ENCODE measurements at regions of chr11 and their contacts with region 1.

Region 1: DNA sequence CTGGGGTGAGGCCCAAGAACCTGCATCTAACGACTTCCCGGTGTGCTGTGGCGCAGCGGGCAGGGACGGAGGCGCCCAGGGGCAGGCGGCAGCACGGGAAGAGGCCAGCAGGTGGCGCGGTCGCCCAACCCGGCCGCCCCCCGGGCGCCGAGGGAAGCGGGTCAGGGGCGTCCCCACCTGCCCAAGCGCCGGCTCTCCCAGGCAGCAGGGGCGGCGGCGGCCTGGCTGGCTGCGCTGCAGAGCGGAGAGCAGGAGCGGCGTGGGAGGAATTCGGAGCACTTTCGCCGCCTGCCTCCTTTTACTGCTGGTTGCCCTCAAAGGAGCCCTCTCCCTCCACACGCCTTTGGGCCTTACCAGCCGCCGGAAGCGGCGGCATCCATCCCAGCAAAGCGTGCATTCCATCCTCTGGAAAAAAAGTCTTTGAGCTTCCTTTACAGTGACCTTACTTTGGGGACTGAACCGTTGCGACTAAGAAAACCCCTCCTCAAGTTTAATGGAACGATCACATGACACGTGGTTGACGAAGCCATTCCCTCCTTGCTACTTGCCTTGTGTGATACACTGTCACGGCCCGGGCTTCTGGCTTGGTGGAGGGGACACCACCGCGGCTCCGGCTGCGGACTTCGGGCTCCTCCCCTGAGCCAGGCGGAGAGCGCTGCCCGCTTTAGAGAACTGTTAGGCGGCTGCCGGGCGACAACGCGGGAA is 106.8 kb upstream of the CLMP start:
- DNase-seq: peak; percentile 87

Region 2: DNA sequence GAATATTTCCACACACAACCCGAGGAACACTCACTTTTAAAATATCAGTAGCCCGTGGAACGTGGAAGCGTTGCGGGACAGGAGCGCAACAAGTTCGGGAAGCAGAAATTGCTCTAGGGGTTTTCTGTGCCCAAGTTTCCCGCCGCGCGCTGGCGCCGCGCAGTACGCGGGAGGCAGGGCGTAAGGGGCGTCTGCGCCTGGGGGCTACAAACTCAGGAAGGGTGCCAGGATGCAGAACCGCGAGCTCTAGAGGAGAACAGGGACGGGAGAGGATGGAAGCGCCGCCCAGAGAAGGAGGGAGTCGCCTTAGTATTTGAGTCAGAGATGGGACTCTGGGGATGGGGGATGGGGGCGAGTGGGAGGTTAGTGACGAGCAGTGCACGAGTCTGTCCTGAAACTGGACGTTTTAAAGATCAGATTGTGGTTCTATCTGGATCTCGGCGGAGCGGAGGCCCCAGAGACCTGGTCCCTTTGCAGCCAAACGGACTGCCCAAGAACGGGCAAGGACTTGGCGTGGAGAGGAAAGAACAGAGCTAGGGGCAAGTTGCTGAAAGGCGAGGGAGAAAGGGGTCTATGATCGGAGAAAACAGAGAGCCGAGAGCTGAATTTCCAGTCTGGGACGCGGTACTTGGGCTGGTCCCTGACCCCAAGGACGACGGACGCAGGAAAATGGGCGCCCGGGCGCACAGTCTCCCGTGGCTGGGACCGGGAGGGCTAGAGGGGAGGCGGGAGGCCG is 324.9 kb before region 1 on chr11:
- intact Hi-C with region 1: no loop called
- DNase-seq: no peak

Region 3: GRCh38 chr11:123174196-123175183 is 127.4 kb before region 1 on chr11:
- intact Hi-C with region 1: no loop called
- DNase-seq: no peak

Region 4: DNA sequence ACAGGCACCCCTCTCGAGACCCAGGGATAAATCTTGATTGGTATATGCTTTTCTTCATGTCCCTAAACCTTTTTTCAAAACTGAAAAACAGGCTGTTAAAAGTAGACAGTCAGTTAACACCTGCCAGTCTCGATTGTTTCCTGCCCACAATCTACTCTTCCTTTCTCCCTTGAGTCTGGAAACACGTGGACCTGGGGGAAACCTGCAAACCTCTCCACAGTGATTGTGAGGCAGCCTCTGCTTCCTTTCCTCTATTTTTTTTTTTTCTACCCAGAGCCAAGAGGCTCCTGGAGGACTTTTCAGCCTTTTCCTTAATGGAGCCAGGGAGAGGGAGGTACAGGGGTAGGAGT is 37.4 kb before region 1 on chr11:
- intact Hi-C with region 1: no loop called
- DNase-seq: no peak

Region 5: GRCh38 chr11:123357961-123358841 is 56.4 kb after region 1 on chr11:
- intact Hi-C with region 1: loop called (anchors 2 kb)
- DNase-seq: no peak

Region 6: DNA sequence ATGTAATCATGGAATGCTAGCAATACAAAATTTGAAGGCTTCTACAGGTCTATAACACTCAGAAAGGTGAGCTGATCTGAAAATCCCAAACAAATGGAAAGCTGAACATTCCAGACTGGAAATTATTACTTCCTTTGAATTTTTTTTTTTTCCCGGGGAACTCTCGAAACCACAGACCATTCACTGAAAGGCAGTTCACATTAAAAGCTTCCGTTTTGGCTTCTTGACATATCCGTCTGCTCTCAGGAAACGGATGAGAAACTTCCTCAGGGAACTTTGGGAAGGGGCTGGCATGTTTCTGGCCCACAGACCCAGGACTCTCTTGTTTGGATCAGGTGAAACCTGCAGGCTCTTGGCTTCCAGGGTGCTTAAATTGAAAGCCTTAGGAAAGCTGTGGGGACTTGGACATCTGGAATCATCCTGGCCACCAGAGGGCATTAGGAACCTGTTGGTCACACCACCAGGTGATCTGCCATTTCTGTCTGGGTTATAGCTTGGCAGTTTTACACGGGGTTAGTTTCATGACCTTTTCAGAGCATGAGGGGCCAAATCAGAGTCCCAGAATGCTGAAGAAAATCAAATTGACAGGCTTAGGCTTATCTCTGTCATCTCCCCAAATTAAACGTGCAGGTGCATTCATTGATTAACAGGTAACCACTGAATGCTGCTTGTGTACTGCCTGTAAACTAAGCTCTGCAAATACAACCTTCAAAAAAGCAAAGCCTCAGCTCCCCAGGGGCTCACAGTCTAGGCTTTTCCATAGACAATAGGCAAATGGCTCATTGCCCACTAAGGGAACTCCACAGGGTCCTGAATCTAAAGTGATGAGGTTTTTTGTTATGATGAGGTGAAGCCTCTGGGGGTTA is 105.5 kb after region 1 on chr11:
- intact Hi-C with region 1: loop called (anchors 2 kb)
- DNase-seq: no peak

Measured in cardiac septum (tissue), 1 donor.